ENCODE measurements at regions of chr3 and their contacts with region 1.

Region 1: GRCh38 chr3:24963762-24964625 is 464.1 kb upstream of the RARB start:
- DNase-seq: no peak
- H3K4me3 ChIP-seq: no peak overlapping the region
- H3K27ac ChIP-seq: no peak overlapping the region
- H3K4me1 ChIP-seq: no peaks in the 10 kb centered on the region
- H3K27me3 ChIP-seq: no peaks in the 10 kb centered on the region
- CTCF ChIP-seq: peak; percentile 39 to 71 (median 55)
- POLR2A ChIP-seq: no peak

Region 2: GRCh38 chr3:24773798-24774197 is 190.2 kb before region 1 on chr3:
- intact Hi-C with region 1: loop called (anchors 10 kb)
- DNase-seq: peak; percentile 39
- H3K4me3 ChIP-seq: no peak overlapping the region
- H3K27ac ChIP-seq: no peak overlapping the region
- H3K4me1 ChIP-seq: no peaks in the 10 kb centered on the region
- H3K27me3 ChIP-seq: no peaks in the 10 kb centered on the region
- CTCF ChIP-seq: peak in 3 of 4 experiments; percentile 56 to 74 (median 68)
- POLR2A ChIP-seq: no peak